Naive thymus-derived CD8-positive, alpha-beta T cell (primary cell): ENCODE measurements at regions of chr5 and their contacts with region 1.

Region 1: DNA sequence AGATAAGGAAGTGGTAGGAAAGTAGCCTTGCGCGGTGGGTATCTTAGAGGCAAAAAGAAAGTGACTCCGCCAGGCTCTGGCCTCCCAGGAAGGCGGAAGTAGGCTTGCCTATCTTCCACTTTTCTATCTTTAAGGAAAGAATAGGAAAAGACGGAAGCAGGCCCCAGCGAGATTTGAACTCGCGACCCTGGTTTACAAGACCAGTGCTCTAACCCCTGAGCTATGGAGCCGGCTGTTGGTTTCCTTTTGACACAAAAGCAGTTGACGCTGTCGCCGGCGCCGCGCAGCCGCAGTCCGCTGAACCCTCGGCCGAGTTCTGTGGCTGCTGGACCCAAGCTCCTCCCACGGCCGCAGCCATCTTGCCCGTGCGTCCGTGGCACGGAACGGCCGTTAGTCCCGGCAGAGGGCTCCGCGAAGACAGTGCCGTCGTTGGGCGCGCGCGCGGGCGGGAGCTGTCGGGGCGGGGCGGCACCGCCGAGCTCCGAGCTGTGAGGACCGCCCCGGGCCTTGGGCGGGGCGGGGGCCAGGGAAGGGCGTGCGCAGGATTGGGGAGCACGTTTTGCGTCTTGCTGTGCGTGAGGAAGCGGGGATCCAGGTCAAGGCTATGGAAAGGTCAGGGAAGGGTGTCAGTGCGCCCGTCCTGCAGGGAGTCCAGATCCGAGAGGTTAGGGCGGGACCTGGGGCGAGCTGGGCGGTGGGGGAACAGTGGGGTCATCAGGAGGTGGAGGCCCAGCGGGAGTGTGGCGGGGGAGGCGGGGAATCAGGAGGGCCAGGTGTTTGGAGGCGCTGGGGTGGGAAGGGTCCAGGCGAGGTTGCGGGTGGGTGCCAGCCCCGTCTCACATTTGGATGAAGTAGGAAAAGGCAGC is 13.2 kb downstream of the TRIM7 start:
- DNase-seq: peak; percentile 90 to 100 (median 97)
- ATAC-seq: peak; percentile 55 to 62
- H3K4me3 Mint-ChIP-seq: peak overlapping the region; percentile 92 to 98 (median 98)
- H3K27ac Mint-ChIP-seq: peak overlapping the region; percentile 90 to 100 (median 96)
- H3K4me1 Mint-ChIP-seq: peaks cover 24 to 48% (median 29%) of the 10 kb centered on the region in 4 donors
- H3K27me3 Mint-ChIP-seq: peaks cover 0 to 15% (median 0%) of the 10 kb centered on the region in 5 donors

Region 2: DNA sequence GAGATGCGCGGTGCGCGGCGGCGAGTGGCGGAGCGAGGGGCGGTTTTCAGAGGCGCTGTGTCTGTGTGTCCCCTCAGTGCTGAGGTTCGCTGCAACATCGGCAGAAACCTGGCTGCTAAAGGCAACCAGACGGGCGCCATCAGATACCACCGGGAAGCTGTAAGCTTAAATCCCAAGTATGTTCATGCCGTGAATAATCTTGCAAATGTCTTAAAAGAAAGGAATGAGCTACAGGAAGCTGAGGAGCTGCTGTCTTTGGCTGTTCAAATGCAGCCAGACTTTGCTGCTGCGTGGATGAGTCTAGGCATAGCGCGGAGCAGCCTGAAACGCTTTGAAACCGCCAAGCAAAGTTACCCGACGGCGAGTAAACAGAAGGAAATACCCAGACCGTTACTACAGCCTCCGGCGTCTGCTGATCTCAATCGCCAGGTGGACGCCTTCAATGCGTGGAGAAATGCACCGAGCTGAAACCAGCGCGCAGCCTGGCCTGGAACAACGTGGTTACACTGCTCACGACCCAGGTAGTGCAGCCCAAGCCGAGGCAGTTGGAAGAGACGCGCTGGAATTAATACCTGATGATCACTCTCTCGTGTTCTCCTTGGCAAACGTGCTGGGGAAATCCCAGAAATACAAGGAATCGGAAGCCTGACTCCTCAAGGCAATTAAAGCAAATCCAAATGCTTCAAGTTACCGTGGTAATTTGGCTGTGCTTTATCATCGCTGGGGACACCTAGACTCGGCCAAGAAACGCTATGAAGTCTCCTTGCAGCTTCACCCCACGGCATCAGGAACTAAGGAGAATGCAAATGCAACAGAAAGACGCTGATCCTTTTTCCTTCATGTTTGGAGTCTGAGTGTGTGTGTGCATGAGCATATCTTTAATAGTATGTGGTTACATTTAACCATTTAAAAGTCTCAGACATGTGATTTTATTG is 76.7 kb before region 1 on chr5:
- POLR2A ChIA-PET with region 1: no interaction called
- DNase-seq: no peak
- ATAC-seq: peak; percentile 33 to 59
- H3K4me3 Mint-ChIP-seq: peak overlapping the region in 5 of 10 donors; percentile 13 to 51 (median 38)
- H3K27ac Mint-ChIP-seq: no peak overlapping the region
- H3K4me1 Mint-ChIP-seq: peaks cover 7 to 13% (median 10%) of the 10 kb centered on the region in 4 donors
- H3K27me3 Mint-ChIP-seq: peaks cover 58 to 91% (median 78%) of the 10 kb centered on the region in 5 donors

Region 3: DNA sequence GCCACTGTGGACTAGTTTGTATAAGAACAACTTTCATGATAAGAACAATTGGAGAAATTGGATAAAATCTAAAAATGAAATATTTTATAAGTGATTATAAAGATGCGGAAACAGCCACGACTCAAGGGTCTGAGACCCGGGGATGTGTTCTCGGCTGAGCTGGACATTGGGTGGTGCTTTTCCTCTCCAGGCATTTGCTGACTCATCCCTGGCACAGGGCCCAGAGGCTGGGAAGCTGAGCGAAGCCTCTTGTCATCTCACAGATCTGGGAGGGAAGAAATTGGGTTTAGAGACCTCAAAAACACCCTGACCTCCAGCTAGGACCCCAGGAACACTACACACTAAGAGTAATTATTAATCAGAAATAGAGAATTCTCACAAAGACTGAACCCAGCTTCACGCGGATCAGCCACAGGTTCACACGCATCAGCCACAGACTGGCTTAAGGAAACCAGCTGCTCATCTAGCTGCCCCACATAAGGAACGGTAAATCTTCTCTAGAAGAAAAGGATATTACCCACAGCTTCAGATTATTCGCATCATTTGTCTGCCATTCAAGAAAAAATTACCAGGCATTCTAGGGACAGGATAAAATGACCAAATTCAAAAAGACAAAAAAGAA is 58.0 kb before region 1 on chr5:
- POLR2A ChIA-PET with region 1: no interaction called
- DNase-seq: no peak
- ATAC-seq: no peak
- H3K4me3 Mint-ChIP-seq: no peak overlapping the region
- H3K27ac Mint-ChIP-seq: no peak overlapping the region
- H3K4me1 Mint-ChIP-seq: no peaks in the 10 kb centered on the region
- H3K27me3 Mint-ChIP-seq: peaks cover 29 to 60% (median 39%) of the 10 kb centered on the region in 5 donors

Region 4: GRCh38 chr5:181161534-181162175 is 30.1 kb before region 1 on chr5:
- POLR2A ChIA-PET with region 1: interaction called, 10 read pairs
- DNase-seq: no peak
- ATAC-seq: no peak
- H3K4me3 Mint-ChIP-seq: peak overlapping the region in 9 of 10 donors; percentile 56 to 89 (median 79)
- H3K27ac Mint-ChIP-seq: peak overlapping the region in 9 of 10 donors; percentile 48 to 99 (median 98)
- H3K4me1 Mint-ChIP-seq: peaks cover 17 to 54% (median 26%) of the 10 kb centered on the region in 4 donors
- H3K27me3 Mint-ChIP-seq: peaks cover 0 to 36% (median 0%) of the 10 kb centered on the region in 5 donors

Region 5: DNA sequence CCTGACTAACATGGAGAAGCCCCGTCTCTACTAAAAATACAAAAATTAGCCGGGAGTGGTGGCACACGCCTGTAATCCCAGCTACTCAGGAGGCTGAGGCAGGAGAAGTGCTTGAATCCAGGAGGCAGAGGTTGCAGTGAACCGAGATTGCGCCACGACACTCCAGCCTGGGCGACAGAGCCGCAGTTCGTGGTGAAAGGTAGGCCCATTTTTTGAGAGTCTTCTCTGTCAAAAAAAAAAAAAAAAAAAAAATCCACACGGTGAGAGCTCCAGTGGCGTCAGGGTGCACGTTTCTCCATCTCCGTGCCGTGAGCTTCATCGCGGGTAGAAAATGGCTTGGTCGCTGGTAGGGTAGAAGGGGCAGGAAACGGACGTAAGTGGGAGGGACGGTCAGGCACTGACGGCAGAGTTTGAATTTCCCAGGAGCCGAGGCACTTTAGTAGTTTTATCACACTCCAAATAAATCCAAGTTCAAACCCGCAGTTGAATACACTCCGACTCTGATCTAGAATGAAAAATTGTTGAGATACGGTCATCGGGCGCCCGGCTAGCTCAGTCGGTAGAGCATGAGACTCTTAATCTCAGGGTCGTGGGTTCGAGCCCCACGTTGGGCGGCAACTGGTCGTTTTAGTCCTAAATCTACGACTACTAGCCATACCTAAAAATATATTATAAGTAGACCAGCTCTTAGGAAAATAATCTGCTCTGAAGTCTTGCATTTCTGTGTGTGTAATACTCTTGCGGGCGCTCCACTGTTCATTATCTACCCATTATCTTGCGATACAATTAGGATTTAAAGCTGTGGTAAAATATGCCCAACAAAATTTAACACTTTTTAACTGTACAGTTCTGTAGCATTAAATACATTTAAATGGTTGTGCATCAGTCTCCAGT is 15.7 kb after region 1 on chr5:
- POLR2A ChIA-PET with region 1: interaction called, 281 read pairs
- DNase-seq: peak in 9 of 10 donors; percentile 54 to 88 (median 78)
- ATAC-seq: peak; percentile 59 to 74
- H3K4me3 Mint-ChIP-seq: peak overlapping the region; percentile 87 to 98 (median 93)
- H3K27ac Mint-ChIP-seq: peak overlapping the region; percentile 90 to 100 (median 92)
- H3K4me1 Mint-ChIP-seq: peaks cover 27 to 58% (median 34%) of the 10 kb centered on the region in 4 donors
- H3K27me3 Mint-ChIP-seq: peaks cover 4 to 20% (median 11%) of the 10 kb centered on the region in 5 donors

Region 6: DNA sequence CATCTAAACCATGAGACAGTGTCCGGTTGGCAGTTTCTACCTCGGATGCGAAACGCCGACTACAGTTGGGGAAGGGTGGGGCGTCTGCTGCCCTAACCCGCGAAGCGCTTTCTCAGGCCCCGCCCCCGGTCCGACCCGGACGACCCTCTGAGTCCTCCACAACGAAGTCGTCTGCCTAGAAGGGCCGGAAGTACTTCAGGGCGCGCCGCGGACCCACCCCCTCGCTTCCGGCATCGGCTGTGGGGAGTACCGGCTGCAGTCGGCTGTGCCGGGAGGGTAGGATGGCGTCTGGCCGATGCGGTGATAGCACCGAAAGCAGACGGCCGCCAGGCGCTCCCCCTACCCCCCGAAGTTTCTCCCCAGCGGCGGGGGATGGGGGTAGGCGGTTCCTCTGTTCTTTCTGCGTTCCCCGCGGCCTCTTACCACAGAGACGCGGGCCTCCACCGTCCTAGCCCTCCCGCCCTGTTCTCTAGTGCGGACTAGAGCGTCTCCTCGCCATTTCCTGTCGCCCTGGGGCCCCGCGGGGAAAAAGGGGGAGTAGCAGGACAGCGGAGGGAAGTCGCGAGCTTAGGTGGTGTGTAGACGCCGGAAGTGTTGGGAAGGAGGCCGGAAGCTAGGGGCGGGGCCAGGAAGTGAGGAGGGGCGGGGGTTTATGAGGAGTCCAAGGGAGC is 31.4 kb after region 1 on chr5 and contains the start of gene TRIM41:
- POLR2A ChIA-PET with region 1: interaction called, 286 read pairs
- DNase-seq: peak; percentile 91 to 99 (median 98)
- ATAC-seq: peak; percentile 63 to 71
- H3K4me3 Mint-ChIP-seq: peak within 1 kb of the TSS; percentile 91 to 100 (median 98)
- H3K27ac Mint-ChIP-seq: peak within 1 kb of the TSS; percentile 97 to 100 (median 99)
- H3K4me1 Mint-ChIP-seq: peaks cover 34 to 71% (median 67%) of the 10 kb centered on the region in 4 donors
- H3K27me3 Mint-ChIP-seq: peaks cover 0 to 10% (median 0%) of the 10 kb centered on the region in 5 donors
- polyA plus RNA-seq, gene TRIM41: 1.1 to 2.6 (median 1.6) TPM